Calu3 (cell line): ENCODE measurements at regions of chr1 and their contacts with region 1.

Region 1: GRCh38 chr1:227357171-227357880 is 39.0 kb upstream of the CDC42BPA start:
- DNase-seq: peak; percentile 75
- H3K4me3 Mint-ChIP-seq: no peak overlapping the region
- H3K27ac Mint-ChIP-seq: peak overlapping the region; percentile 81
- H3K4me1 Mint-ChIP-seq: peaks cover 20% of the 10 kb centered on the region
- H3K27me3 Mint-ChIP-seq: no peaks in the 10 kb centered on the region
- CTCF ChIP-seq: no peak

Region 2: DNA sequence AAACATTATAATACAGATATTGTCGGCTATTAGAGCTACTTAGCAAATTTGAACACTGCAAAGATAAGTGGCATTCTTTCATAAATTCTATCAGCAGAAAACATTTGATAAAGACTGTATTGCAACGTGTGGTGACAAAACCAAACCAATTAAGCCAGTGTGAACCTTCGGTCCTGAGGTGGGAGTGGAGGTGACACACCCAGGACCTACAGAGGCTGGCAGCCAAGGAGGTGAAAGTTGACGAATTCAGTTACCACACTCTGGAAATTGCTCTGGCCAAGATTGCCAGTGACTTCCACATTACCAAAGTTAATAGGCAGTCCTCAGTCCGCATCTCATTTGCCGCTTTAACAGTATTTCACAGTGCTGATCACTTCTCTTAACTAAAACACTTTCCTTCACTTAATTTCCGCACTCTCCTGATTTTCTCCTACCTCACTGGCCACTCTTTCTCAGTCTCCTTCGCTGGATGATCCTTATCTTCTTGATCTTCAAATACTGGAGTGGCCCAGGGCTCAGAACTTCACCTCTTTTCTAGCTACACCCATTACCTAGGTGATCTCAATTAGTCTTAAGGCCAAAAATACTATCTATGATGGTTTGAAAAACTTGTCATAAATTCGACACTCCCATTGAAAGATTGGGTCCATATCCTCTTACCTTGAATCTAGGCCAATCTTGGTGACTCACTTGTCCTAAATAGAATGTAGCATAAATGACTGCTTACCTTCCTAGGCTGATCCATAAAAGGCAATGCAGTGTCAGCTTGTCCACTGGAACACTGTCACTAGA is 34.0 kb before region 1 on chr1:
- CTCF ChIA-PET with region 1: interaction called, 4 read pairs
- intact Hi-C with region 1: loop called (anchors 1 kb)
- DNase-seq: peak; percentile 75
- H3K4me3 Mint-ChIP-seq: peak overlapping the region; percentile 42
- H3K27ac Mint-ChIP-seq: peak overlapping the region; percentile 73
- H3K4me1 Mint-ChIP-seq: peaks cover 62% of the 10 kb centered on the region
- H3K27me3 Mint-ChIP-seq: no peaks in the 10 kb centered on the region
- CTCF ChIP-seq: no peak